IMR-90 (cell line): ENCODE measurements at regions of chr2 and their contacts with region 1.

Region 1: DNA sequence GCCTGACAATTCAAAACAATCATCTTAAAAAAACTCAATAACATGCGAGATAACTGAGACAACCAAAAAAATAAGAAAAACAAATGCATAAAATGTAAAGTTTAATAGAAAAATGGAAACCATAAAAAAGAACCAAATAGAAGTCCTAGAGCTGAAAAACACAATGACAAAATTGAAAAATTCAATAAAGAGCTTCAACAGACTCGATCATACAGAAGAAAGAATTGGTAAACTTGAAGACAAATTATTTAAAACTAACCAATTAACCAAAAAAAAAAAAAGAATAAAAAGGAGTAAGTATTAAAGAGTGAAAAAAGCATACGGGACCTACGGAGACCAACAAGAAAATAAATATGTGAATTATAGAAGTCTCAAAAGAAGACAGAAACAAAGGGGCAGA is 37.7 kb downstream of the GPC1 start:
- DNase-seq: no peak
- ATAC-seq: no peak
- H3K4me3 ChIP-seq: no peak overlapping the region
- H3K27ac ChIP-seq: no peak overlapping the region
- H3K4me1 ChIP-seq: no peaks in the 10 kb centered on the region
- H3K27me3 ChIP-seq: no peaks in the 10 kb centered on the region
- CTCF ChIP-seq: no peak
- POLR2A ChIP-seq: no peak
- RAD21 ChIP-seq: no peak

Region 2: GRCh38 chr2:240412211-240412861 is 60.9 kb before region 1 on chr2:
- CTCF ChIA-PET with region 1: no interaction called
- POLR2A ChIA-PET with region 1: no interaction called
- dilution Hi-C with region 1: no loop called
- in situ Hi-C with region 1: no loop called
- intact Hi-C with region 1: no loop called
- DNase-seq: no peak
- ATAC-seq: peak; percentile 32; the same call in 1 of the 2 replicates
- H3K4me3 ChIP-seq: no peak overlapping the region
- H3K27ac ChIP-seq: no peak overlapping the region
- H3K4me1 ChIP-seq: no peaks in the 10 kb centered on the region; the same call in 1 of the 2 replicates
- H3K27me3 ChIP-seq: no peaks in the 10 kb centered on the region; the same call in 1 of the 2 replicates
- CTCF ChIP-seq: no peak
- POLR2A ChIP-seq: no peak
- RAD21 ChIP-seq: no peak

Region 3: GRCh38 chr2:240584486-240585051 is 111.4 kb after region 1 on chr2:
- CTCF ChIA-PET with region 1: no interaction called
- POLR2A ChIA-PET with region 1: interaction called, 12 read pairs
- dilution Hi-C with region 1: no loop called
- in situ Hi-C with region 1: no loop called
- intact Hi-C with region 1: no loop called
- DNase-seq: no peak
- ATAC-seq: no peak
- H3K4me3 ChIP-seq: no peak overlapping the region
- H3K27ac ChIP-seq: no peak overlapping the region
- H3K4me1 ChIP-seq: peaks cover 21% of the 10 kb centered on the region
- H3K27me3 ChIP-seq: no peaks in the 10 kb centered on the region
- CTCF ChIP-seq: no peak
- POLR2A ChIP-seq: no peak
- RAD21 ChIP-seq: no peak

Region 4: DNA sequence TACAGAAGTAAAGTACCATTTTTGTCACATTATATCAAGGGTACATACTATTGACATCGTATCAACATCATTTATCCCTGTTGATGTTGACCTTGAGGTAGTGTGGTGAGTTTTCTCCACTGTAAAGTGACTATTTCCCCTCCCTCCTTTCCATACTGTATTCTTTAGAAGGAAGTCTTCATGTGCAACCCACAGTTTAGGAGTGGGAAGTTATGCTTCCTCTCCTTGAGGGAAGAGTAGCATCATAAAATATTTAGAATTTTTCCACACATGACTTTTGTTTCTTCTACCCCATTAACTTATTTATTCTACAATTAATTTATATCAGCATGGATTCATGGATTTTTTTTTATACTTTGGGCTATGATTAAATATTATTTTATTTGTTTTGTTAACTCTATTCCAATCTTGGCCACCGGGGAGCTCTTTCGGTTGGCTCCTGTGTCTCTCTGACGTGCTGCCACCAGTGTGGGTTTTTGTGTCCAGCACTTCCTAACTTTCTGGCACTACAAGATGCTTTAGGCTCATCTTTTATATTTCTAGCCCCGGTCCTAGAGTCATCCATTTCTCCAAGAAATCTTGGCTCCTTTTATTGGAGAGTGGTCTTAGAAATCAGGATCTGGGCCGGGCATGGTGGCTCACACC is 190.5 kb after region 1 on chr2:
- CTCF ChIA-PET with region 1: no interaction called
- POLR2A ChIA-PET with region 1: no interaction called
- dilution Hi-C with region 1: no loop called
- in situ Hi-C with region 1: no loop called
- intact Hi-C with region 1: no loop called
- DNase-seq: no peak
- ATAC-seq: no peak
- H3K4me3 ChIP-seq: no peak overlapping the region
- H3K27ac ChIP-seq: no peak overlapping the region
- H3K4me1 ChIP-seq: no peaks in the 10 kb centered on the region
- H3K27me3 ChIP-seq: peaks cover 8% of the 10 kb centered on the region; the same call in 1 of the 2 replicates
- CTCF ChIP-seq: no peak
- POLR2A ChIP-seq: no peak
- RAD21 ChIP-seq: no peak